ENCODE measurements at regions of chr10 and their contacts with region 1.

Region 1: DNA sequence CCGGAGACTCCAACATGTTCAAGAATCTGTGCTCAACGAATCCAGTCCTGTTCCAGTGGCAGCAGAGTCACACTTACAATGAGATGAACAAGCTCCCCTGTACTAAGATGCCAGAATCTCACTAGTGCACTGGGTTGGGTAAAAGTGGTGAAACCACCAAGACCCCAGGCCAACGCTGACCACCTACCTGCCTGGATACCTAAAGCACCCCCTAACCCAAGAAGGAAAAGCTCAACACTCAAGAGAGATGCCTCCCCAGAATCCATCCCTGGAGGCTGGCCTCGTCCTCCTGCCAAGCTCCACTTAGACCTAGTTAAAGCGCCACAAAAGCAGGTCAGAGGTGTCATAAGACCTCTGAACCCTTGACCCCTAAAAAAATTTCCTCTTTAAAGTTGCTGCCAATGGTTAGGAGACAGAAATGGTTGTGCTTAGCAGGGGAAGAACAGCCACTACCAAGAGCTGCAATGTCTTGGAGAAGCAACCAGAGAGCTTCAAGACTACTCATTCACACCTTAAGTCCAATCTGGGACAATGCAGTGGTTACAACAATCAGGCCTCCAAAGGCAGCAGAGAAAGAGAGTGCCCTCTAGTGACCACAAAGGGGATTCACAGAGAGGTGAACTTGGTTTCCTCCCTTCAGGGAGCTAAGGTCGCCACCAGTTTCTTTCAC is 94.6 kb upstream of the MACROH2A2 start:
- DNase-seq: no peak
- H3K4me3 ChIP-seq: no peak overlapping the region
- H3K27ac ChIP-seq: no peak overlapping the region
- H3K4me1 ChIP-seq: peaks cover 2 to 9% (median 3%) of the 10 kb centered on the region in 4 experiments; a peak in 6 of 7 replicates
- H3K27me3 ChIP-seq: peaks cover 0 to 13% (median 5%) of the 10 kb centered on the region in 4 experiments; a peak in 3 of 7 replicates
- CTCF ChIP-seq: peak; percentile 43 to 93 (median 87)
- EP300 ChIP-seq: no peak
- POLR2A ChIP-seq: no peak
- RAD21 ChIP-seq: peak; percentile 83 to 88

Region 2: DNA sequence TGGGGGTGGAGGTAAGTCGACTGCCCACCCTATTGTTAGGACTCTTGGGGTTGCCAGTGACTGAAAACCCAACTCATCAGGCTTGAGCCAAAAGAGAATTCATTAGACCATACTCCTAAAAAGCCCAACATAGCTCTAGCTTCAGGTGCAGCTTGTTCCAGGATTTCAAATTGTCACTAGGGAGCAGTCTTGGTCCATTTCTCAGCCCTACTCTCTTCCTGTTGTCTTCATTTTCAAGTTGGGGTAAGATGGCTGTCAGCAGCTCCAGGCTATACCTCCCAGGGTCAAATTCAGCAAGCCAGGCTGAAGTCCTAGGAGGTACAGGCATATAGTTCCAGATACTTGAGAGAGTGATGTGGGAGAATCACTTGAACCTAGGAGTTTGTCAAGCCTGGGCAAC is 171.2 kb before region 1 on chr10:
- CTCF ChIA-PET with region 1: interaction called, 92 read pairs
- POLR2A ChIA-PET with region 1: no interaction called
- DNase-seq: no peak
- H3K4me3 ChIP-seq: no peak overlapping the region
- H3K27ac ChIP-seq: no peak overlapping the region
- H3K4me1 ChIP-seq: peaks cover 0 to 3% (median 0%) of the 10 kb centered on the region in 4 experiments; a peak in 1 of 7 replicates
- H3K27me3 ChIP-seq: peaks cover 0 to 5% (median 0%) of the 10 kb centered on the region in 4 experiments; a peak in 1 of 7 replicates
- CTCF ChIP-seq: peak in 2 of 3 experiments; percentile 62 to 64; a peak in 3 of 4 replicates
- EP300 ChIP-seq: no peak
- POLR2A ChIP-seq: no peak
- RAD21 ChIP-seq: peak; percentile 82 to 85

Region 3: GRCh38 chr10:69885379-69886013 is 72.5 kb before region 1 on chr10:
- CTCF ChIA-PET with region 1: interaction called, 24 read pairs
- POLR2A ChIA-PET with region 1: no interaction called
- DNase-seq: no peak
- H3K4me3 ChIP-seq: no peak overlapping the region
- H3K27ac ChIP-seq: no peak overlapping the region
- H3K4me1 ChIP-seq: peaks cover 0 to 10% (median 7%) of the 10 kb centered on the region in 4 experiments; a peak in 6 of 7 replicates
- H3K27me3 ChIP-seq: no peaks in the 10 kb centered on the region
- CTCF ChIP-seq: peak in 2 of 3 experiments; percentile 38 to 50; a peak in 2 of 4 replicates
- EP300 ChIP-seq: no peak
- POLR2A ChIP-seq: no peak
- RAD21 ChIP-seq: no peak; a peak in 1 of 4 replicates

Region 4: GRCh38 chr10:69968830-69969229 is 10.8 kb after region 1 on chr10:
- CTCF ChIA-PET with region 1: interaction called, 31 read pairs
- POLR2A ChIA-PET with region 1: no interaction called
- DNase-seq: peak in 1 of 2 experiments; percentile 45
- H3K4me3 ChIP-seq: no peak overlapping the region
- H3K27ac ChIP-seq: no peak overlapping the region
- H3K4me1 ChIP-seq: peaks cover 0 to 4% (median 0%) of the 10 kb centered on the region in 4 experiments; a peak in 2 of 7 replicates
- H3K27me3 ChIP-seq: peaks cover 0 to 5% (median 0%) of the 10 kb centered on the region in 4 experiments; a peak in 1 of 7 replicates
- CTCF ChIP-seq: peak; percentile 72 to 82 (median 81)
- EP300 ChIP-seq: no peak
- POLR2A ChIP-seq: no peak
- RAD21 ChIP-seq: peak; percentile 90 to 93

Region 5: DNA sequence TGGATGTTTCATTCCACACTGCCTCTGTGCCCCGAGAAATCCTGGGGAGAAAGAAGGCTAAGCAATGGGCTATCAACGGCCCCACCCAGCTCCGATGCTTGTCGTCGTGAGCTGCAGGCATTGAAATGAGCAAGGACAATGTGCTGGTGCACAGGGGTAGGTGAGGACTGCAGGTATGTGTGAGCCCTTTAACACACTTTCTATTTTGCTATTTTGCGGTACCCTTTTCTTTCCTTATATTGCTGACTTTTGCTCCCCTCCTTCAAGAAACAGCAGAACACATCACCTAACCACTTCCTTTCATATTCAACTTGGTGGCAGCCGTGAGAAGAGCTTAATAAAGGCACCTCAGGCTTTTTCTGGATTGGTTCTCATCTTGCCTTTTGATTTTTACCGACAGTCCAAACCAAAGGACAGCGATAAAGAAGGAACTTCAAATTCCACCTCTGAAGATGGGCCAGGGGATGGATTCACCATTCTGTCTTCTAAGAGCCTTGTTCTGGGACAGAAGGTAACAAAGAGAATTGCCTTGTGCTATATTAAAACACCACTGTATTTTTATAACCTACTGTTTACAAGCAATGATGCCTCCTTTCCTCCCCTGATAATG is 135.4 kb after region 1 on chr10:
- CTCF ChIA-PET with region 1: interaction called, 11 read pairs
- POLR2A ChIA-PET with region 1: no interaction called
- DNase-seq: no peak
- H3K4me3 ChIP-seq: no peak overlapping the region
- H3K27ac ChIP-seq: no peak overlapping the region
- H3K4me1 ChIP-seq: no peaks in the 10 kb centered on the region; a peak in 1 of 7 replicates
- H3K27me3 ChIP-seq: no peaks in the 10 kb centered on the region
- CTCF ChIP-seq: no peak
- EP300 ChIP-seq: no peak
- POLR2A ChIP-seq: no peak
- RAD21 ChIP-seq: no peak